PC-9 (cell line): ENCODE measurements at regions of chr3 and their contacts with region 1.

Region 1: DNA sequence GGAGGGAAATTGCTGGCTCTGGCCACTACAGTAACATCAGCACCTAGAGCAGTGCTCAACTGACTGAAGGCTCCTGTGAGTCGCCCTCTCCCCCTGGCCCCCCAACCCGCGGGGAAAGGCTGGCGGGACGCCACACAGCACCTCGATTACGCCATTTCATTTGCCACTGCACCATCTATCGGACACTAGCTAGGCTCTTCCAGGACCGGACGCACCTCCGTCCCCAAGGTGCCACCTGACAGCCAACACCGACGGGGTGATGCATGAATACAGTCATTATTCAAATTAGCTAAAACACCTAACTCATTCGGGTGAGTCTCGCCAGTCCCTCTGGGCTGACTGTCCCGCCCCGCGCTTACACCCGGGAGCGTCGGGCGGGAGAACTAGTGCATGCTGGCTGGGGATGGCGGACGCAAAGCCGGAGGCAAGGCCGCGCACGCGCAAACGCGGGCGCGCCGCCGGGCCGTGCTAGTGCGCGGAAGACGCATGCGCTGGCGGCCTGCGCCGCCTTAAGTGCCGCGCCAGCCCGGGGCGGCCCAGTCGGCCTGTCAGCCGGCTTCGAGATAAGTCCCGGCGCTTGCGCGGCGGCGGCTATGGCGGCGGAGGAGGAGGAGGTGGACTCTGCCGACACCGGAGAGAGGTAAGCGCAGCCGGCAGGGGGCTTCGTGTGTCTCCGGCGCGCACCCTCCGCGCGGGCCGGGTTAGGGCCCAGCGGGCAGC is at the start of gene ABHD5:
- DNase-seq: peak; percentile 84 to 90
- H3K4me3 ChIP-seq: peak within 1 kb of the TSS; percentile 68
- H3K27ac ChIP-seq: peak within 1 kb of the TSS; percentile 88
- H3K4me1 ChIP-seq: peaks cover 50% of the 10 kb centered on the region
- H3K27me3 ChIP-seq: no peaks in the 10 kb centered on the region
- CTCF ChIP-seq: no peak; the same call in 1 of the 2 replicates
- total RNA-seq, gene ABHD5: 16.1 and 19.9 TPM in 2 replicates

Region 2: GRCh38 chr3:43559963-43560362 is 130.6 kb before region 1 on chr3:
- CTCF ChIA-PET with region 1: no interaction called
- POLR2A ChIA-PET with region 1: interaction called, 23 read pairs
- intact Hi-C with region 1: no loop called
- DNase-seq: no peak
- H3K4me3 ChIP-seq: no peak overlapping the region
- H3K27ac ChIP-seq: no peak overlapping the region
- H3K4me1 ChIP-seq: no peaks in the 10 kb centered on the region
- H3K27me3 ChIP-seq: no peaks in the 10 kb centered on the region
- CTCF ChIP-seq: no peak

Region 3: GRCh38 chr3:43638594-43639447 is 51.7 kb before region 1 on chr3:
- CTCF ChIA-PET with region 1: no interaction called
- POLR2A ChIA-PET with region 1: interaction called, 4 read pairs
- intact Hi-C with region 1: loop called (anchors 2 kb)
- DNase-seq: peak; percentile 70 to 85
- H3K4me3 ChIP-seq: peak overlapping the region; percentile 18; the same call in 1 of the 2 replicates
- H3K27ac ChIP-seq: peak overlapping the region; percentile 78
- H3K4me1 ChIP-seq: peaks cover 23% of the 10 kb centered on the region
- H3K27me3 ChIP-seq: no peaks in the 10 kb centered on the region
- CTCF ChIP-seq: peak; percentile 59

Region 4: GRCh38 chr3:43769471-43770425 is 79.2 kb after region 1 on chr3:
- CTCF ChIA-PET with region 1: interaction called, 12 read pairs
- POLR2A ChIA-PET with region 1: no interaction called
- intact Hi-C with region 1: loop called (anchors 2 kb)
- DNase-seq: peak; percentile 95 to 99
- H3K4me3 ChIP-seq: peak overlapping the region; percentile 34; the same call in 1 of the 2 replicates
- H3K27ac ChIP-seq: peak overlapping the region; percentile 90
- H3K4me1 ChIP-seq: peaks cover 83% of the 10 kb centered on the region
- H3K27me3 ChIP-seq: no peaks in the 10 kb centered on the region
- CTCF ChIP-seq: peak; percentile 92

Region 5: DNA sequence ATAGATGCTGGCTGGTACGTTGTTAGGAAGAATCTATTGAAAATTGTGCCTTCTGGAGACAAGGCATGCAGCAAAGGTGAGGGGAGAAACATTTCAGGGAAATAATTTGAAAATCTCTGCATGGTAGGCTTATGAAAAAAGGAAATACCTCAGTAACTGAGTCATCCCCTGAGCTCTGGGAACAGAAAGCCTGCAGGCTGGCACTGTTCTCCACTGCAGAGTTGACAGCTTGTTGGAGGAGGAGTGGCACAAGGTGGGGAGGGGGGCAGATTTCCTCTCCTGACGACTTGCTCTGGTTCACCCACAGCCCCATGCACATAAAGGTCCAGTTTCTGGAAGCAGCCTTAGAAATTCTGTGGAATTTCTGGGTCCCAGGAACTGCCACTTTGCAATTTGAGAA is 179.6 kb after region 1 on chr3:
- CTCF ChIA-PET with region 1: no interaction called
- POLR2A ChIA-PET with region 1: no interaction called
- intact Hi-C with region 1: loop called (anchors 5 kb)
- DNase-seq: peak; percentile 64 to 89
- H3K4me3 ChIP-seq: peak overlapping the region; percentile 32; the same call in 1 of the 2 replicates
- H3K27ac ChIP-seq: peak overlapping the region; percentile 97
- H3K4me1 ChIP-seq: peaks cover 97% of the 10 kb centered on the region
- H3K27me3 ChIP-seq: no peaks in the 10 kb centered on the region
- CTCF ChIP-seq: no peak

Region 6: GRCh38 chr3:44198284-44199269 is 508.0 kb after region 1 on chr3:
- CTCF ChIA-PET with region 1: interaction called, 3 read pairs
- POLR2A ChIA-PET with region 1: no interaction called
- intact Hi-C with region 1: loop called (anchors 5 kb)
- DNase-seq: peak; percentile 59 to 78
- H3K4me3 ChIP-seq: no peak overlapping the region
- H3K27ac ChIP-seq: no peak overlapping the region
- H3K4me1 ChIP-seq: no peaks in the 10 kb centered on the region
- H3K27me3 ChIP-seq: no peaks in the 10 kb centered on the region
- CTCF ChIP-seq: peak; percentile 79